Common myeloid progenitor, CD34-positive (primary cell): ENCODE measurements at regions of chr12 and their contacts with region 1.

Region 1: GRCh38 chr12:62934799-62935674 is at the start of gene PPM1H:
- DNase-seq: peak; percentile 89 to 94 (median 91)
- H3K4me3 ChIP-seq: peak within 1 kb of the TSS; percentile 75 to 99 (median 91)
- H3K27ac ChIP-seq: peak within 1 kb of the TSS; percentile 46 to 66
- H3K4me1 ChIP-seq: peaks cover 0 to 44% (median 29%) of the 10 kb centered on the region in 4 experiments
- H3K27me3 ChIP-seq: no peaks in the 10 kb centered on the region

Region 2: GRCh38 chr12:62799126-62799736 is 135.8 kb before region 1 on chr12:
- CTCF ChIA-PET with region 1: interaction called, 30 read pairs
- POLR2A ChIA-PET with region 1: no interaction called
- DNase-seq: peak; percentile 73 to 86 (median 82)
- H3K4me3 ChIP-seq: no peak overlapping the region
- H3K27ac ChIP-seq: no peak overlapping the region
- H3K4me1 ChIP-seq: no peaks in the 10 kb centered on the region
- H3K27me3 ChIP-seq: no peaks in the 10 kb centered on the region

Region 3: GRCh38 chr12:62854024-62854423 is 81.0 kb before region 1 on chr12:
- CTCF ChIA-PET with region 1: interaction called, 10 read pairs
- POLR2A ChIA-PET with region 1: no interaction called
- DNase-seq: peak in 1 of 3 donors; percentile 46
- H3K4me3 ChIP-seq: no peak overlapping the region
- H3K27ac ChIP-seq: no peak overlapping the region
- H3K4me1 ChIP-seq: peaks cover 0 to 9% (median 2%) of the 10 kb centered on the region in 4 experiments
- H3K27me3 ChIP-seq: no peaks in the 10 kb centered on the region

Region 4: DNA sequence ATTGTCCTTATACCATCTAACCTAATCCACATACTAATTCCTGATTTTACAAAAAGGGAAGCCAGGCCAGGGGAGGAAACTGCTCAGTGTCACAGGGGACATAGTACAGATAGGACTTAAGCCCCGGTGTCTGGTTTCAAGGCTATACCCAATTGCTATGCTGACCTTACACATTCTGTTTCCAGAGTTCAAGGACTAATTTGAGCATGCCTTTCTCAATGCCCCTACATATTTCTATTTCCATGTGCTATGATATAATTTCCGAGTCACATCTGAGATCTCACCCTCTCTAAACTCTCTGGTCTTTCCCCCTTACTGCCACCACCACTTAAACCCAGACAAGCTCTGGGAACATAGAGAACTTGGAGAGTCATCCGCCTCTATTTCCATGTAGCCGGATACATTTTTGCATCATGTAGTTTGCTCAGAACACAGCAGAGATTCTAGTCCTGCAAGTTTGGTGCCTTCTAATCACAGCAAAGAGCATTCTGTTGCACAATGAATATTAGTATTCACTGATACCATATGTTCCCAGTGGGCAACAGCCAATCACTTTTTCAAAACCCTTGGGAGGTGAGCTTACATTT is 34.3 kb before region 1 on chr12:
- CTCF ChIA-PET with region 1: interaction called, 11 read pairs
- POLR2A ChIA-PET with region 1: no interaction called
- DNase-seq: peak in 1 of 3 donors; percentile 28
- H3K4me3 ChIP-seq: no peak overlapping the region
- H3K27ac ChIP-seq: no peak overlapping the region
- H3K4me1 ChIP-seq: peaks cover 11 to 45% (median 30%) of the 10 kb centered on the region in 4 experiments
- H3K27me3 ChIP-seq: no peaks in the 10 kb centered on the region

Region 5: GRCh38 chr12:62983599-62984022 is 48.6 kb after region 1 on chr12:
- CTCF ChIA-PET with region 1: interaction called, 17 read pairs
- POLR2A ChIA-PET with region 1: no interaction called
- DNase-seq: peak; percentile 58 to 73 (median 63)
- H3K4me3 ChIP-seq: no peak overlapping the region
- H3K27ac ChIP-seq: no peak overlapping the region
- H3K4me1 ChIP-seq: no peaks in the 10 kb centered on the region
- H3K27me3 ChIP-seq: no peaks in the 10 kb centered on the region

Region 6: GRCh38 chr12:63228853-63229252 is 293.8 kb after region 1 on chr12:
- CTCF ChIA-PET with region 1: no interaction called
- POLR2A ChIA-PET with region 1: no interaction called
- DNase-seq: no peak
- H3K4me3 ChIP-seq: no peak overlapping the region
- H3K27ac ChIP-seq: no peak overlapping the region
- H3K4me1 ChIP-seq: no peaks in the 10 kb centered on the region
- H3K27me3 ChIP-seq: no peaks in the 10 kb centered on the region

Region 7: GRCh38 chr12:63387771-63388170 is 452.7 kb after region 1 on chr12:
- CTCF ChIA-PET with region 1: no interaction called
- POLR2A ChIA-PET with region 1: no interaction called
- DNase-seq: no peak
- H3K4me3 ChIP-seq: no peak overlapping the region
- H3K27ac ChIP-seq: no peak overlapping the region
- H3K4me1 ChIP-seq: peaks cover 0 to 11% (median 3%) of the 10 kb centered on the region in 4 experiments
- H3K27me3 ChIP-seq: no peaks in the 10 kb centered on the region